ENCODE measurements at regions of chr12 and their contacts with region 1.

Region 1: DNA sequence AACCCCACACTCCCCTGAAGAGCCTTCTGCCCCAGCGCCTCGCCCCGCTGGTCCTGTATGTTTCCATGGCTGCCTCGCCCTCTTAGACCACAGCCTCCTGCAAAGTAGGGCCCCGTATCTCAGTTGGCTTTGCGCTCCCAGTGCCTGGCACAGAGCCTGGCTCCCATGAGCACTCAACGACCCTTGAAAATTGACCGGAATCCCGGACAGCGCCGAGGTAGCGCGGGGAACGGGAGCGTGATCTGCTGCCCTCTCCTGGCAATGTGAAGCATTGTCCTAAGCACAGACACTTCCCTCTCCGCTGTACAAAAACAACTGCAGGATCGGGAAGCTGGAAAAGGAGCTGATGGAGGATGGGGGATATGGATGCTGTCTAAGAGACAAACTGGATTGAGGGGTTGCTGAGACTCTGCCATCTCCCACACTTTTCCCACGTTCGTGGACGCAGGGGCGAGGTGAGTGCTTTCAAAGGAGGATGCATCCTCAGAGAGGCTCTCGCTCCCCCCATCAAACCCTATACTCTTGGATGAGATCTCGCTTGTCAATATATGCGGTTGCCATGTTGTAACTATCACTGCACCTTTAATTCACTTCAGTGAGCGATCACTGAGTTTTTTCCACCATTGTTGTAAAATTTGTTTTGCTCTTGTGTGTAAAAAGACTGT is 10.7 kb upstream of the FKBP4 start:
- DNase-seq: peak; percentile 73
- H3K4me3 ChIP-seq: no peak overlapping the region
- H3K27ac ChIP-seq: no peak overlapping the region
- H3K4me1 ChIP-seq: peaks cover 7% of the 10 kb centered on the region
- H3K27me3 ChIP-seq: no peaks in the 10 kb centered on the region
- CTCF ChIP-seq: peak; percentile 83

Region 2: DNA sequence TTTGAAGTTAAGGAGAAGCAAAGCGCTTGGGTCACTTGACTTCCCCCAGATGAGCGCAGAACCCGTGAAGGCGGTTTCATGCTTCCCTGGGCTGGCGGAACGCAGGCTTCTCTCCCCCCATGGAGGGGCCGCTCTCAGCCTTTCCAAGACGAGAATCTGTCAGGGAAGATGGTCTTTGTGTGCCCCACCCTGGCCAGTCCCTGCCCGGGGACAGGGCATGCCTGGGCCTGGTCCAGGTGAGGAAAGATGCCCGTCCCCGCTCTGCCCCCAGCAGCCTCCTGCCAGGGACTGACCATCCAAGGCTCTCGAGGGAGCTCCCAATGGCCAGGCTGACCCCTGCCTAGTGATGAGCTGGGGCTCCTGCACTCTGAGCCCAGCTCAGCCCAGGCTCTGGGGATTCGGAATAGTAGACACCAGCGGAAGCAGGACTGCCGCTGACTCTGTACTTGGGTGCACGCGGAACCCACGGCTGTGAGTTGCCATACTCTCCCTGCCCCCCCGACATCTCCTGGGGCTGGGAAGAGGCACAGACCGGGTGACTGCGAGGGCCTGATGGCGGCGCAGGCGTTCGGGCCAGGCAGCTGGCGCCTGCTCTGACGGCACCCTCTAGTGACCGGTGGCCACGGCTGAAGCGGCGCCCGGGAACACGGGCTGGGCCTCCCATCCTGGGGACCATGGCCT is 131.5 kb before region 1 on chr12:
- intact Hi-C with region 1: no loop called
- DNase-seq: no peak
- H3K4me3 ChIP-seq: no peak overlapping the region
- H3K27ac ChIP-seq: no peak overlapping the region
- H3K4me1 ChIP-seq: no peaks in the 10 kb centered on the region
- H3K27me3 ChIP-seq: no peaks in the 10 kb centered on the region
- CTCF ChIP-seq: no peak

Region 3: GRCh38 chr12:2682296-2683251 is 101.5 kb before region 1 on chr12:
- intact Hi-C with region 1: loop called (anchors 10 kb)
- DNase-seq: no peak
- H3K4me3 ChIP-seq: no peak overlapping the region
- H3K27ac ChIP-seq: no peak overlapping the region
- H3K4me1 ChIP-seq: no peaks in the 10 kb centered on the region
- H3K27me3 ChIP-seq: no peaks in the 10 kb centered on the region
- CTCF ChIP-seq: peak; percentile 27

Region 4: GRCh38 chr12:2739817-2740641 is 44.0 kb before region 1 on chr12:
- intact Hi-C with region 1: loop called (anchors 2 kb)
- DNase-seq: peak; percentile 32
- H3K4me3 ChIP-seq: no peak overlapping the region
- H3K27ac ChIP-seq: no peak overlapping the region
- H3K4me1 ChIP-seq: no peaks in the 10 kb centered on the region
- H3K27me3 ChIP-seq: no peaks in the 10 kb centered on the region
- CTCF ChIP-seq: peak; percentile 52

Measured in colonic mucosa (tissue), 4 donors.